Activated B cell treated with CpG ODN at 0.5 μM for 24 hours (primary cell): ENCODE measurements at regions of chr9 and their contacts with region 1.

Region 1: DNA sequence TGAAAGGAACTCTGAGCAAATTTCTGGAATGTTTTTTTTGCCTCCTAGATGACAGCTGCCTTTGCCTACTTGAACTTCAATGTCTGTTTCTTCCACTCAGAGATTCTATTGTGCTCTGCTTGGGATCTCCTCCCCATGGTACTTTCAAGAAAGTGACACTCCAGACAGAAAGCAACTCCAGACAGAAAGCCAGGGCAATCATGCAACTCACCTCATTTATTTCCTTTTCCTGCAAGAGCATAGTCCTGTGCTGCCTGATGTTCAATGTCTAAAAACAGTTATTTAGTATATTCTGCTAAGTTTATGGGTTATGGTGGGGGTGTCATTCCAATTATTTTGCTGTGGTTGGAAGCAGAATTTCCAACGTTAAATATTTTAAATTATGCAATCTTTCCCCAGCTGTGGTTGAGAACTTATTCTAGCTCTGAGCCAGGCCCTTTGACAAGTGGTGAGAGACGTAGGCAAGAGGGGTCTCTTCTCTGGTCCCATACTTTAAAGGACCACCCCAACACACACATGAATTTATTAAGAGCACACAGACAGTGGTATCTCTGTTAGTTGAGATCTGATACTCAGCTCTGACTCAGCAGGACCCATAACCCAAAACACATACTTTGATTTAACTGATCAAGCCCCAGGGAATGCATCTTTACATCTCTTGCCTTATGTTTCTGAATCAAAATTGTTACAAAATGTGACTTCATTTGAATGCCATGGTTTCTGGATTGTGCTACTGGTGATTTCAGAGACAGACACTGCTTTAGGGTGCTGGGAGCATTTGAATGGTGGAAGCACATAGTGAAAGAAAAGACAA is 39.5 kb upstream of the MAMDC2 start:
- DNase-seq: no peak
- ATAC-seq: no peak
- H3K4me3 Mint-ChIP-seq: no peak overlapping the region
- H3K27ac Mint-ChIP-seq: no peak overlapping the region
- H3K4me1 Mint-ChIP-seq: no peaks in the 10 kb centered on the region
- H3K27me3 Mint-ChIP-seq: peaks cover 12% of the 10 kb centered on the region
- CTCF ChIP-seq: no peak

Region 2: DNA sequence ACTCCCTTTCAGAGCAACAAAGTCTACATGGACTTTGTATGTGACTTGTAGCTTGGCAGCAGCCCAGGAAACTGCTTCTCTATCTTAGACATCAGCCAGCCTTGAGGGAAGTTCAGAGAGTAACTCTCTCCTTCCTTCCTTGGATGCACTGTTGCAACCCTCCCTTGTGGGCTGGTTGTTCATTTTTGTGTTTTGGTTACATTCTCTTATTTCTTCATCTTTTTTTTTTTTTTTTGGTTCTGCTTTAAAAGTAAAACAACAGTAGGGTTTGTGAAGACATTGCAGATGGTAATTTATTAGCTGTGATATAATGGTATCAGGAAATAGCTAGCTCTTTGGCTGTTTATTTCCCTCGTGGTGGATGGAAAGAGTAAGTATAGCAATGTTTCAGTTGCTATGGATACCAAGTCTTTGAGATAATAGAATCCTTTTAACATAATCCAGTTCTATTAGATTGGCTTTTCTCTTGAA is 58.4 kb before region 1 on chr9:
- CTCF ChIA-PET with region 1: no interaction called
- POLR2A ChIA-PET with region 1: no interaction called
- intact Hi-C with region 1: loop called (anchors 10 kb)
- DNase-seq: no peak
- ATAC-seq: no peak
- H3K4me3 Mint-ChIP-seq: no peak overlapping the region
- H3K27ac Mint-ChIP-seq: no peak overlapping the region
- H3K4me1 Mint-ChIP-seq: peaks cover under 1% of the 10 kb centered on the region
- H3K27me3 Mint-ChIP-seq: peaks cover 12% of the 10 kb centered on the region
- CTCF ChIP-seq: no peak